GM12878 (cell line): ENCODE measurements at regions of chr5 and their contacts with region 1.

Region 1: DNA sequence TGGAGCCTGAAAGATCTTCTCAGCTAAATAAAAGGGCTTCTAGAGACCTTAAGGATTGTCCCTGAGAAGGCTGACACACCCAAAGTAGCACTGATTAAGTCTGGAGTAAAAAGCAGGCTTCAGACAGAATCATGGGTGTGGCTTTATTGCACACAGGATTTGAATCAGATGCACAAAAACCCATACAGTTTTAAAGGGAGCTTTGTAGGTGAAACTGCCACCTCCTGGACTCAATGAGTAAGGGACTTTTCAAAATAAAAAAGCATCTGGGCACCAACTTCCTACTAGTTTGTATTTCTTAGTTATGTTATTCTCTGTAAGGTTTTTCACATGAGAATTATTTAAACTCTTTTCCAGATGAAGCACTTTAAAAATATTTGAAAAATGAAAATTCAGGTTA is 129.4 kb downstream of the EDIL3 start:
- DNase-seq: no peak
- ATAC-seq: peak; percentile 70
- H3K4me3 ChIP-seq: no peak overlapping the region
- H3K27ac ChIP-seq: no peak overlapping the region
- H3K4me1 ChIP-seq: no peaks in the 10 kb centered on the region
- H3K27me3 ChIP-seq: no peaks in the 10 kb centered on the region
- CTCF ChIP-seq: peak in 2 of 3 experiments; percentile 6 to 27; a peak in 2 of 6 replicates
- EP300 ChIP-seq: no peak
- POLR2A ChIP-seq: no peak
- RAD21 ChIP-seq: peak; percentile 24; the same call in 1 of the 2 replicates

Region 2: DNA sequence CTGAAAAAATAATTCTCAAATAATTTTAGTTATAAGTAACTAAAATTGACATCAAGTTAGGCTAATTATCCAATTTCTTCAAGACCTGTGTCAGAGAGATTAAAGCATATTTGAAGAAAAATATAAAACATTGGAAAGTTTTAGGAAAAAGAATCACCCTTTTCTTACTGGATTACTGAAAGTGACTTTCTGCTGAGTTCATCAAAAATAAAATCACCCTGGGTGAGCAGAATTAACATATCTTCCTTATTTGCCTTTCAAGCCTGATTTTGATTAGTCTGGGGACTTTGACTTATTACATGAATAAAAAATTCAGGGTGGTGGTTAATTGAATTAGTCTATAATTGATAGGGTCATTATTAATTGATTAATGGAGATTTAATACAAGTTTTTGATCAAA is 282.4 kb before region 1 on chr5:
- CTCF ChIA-PET with region 1: no interaction called
- POLR2A ChIA-PET with region 1: no interaction called
- RAD21 ChIA-PET with region 1: no interaction called
- SMC1A ChIA-PET with region 1: no interaction called
- in situ Hi-C with region 1: no loop called
- intact Hi-C with region 1: no loop called
- DNase-seq: no peak
- ATAC-seq: no peak
- H3K4me3 ChIP-seq: no peak overlapping the region
- H3K27ac ChIP-seq: no peak overlapping the region
- H3K4me1 ChIP-seq: no peaks in the 10 kb centered on the region
- H3K27me3 ChIP-seq: no peaks in the 10 kb centered on the region
- CTCF ChIP-seq: no peak
- EP300 ChIP-seq: no peak
- POLR2A ChIP-seq: no peak
- RAD21 ChIP-seq: no peak

Region 3: GRCh38 chr5:84069608-84070179 is 185.6 kb before region 1 on chr5:
- CTCF ChIA-PET with region 1: no interaction called
- POLR2A ChIA-PET with region 1: no interaction called
- RAD21 ChIA-PET with region 1: no interaction called
- SMC1A ChIA-PET with region 1: no interaction called
- in situ Hi-C with region 1: no loop called
- intact Hi-C with region 1: no loop called
- DNase-seq: no peak
- ATAC-seq: no peak
- H3K4me3 ChIP-seq: no peak overlapping the region
- H3K27ac ChIP-seq: no peak overlapping the region
- H3K4me1 ChIP-seq: no peaks in the 10 kb centered on the region
- H3K27me3 ChIP-seq: no peaks in the 10 kb centered on the region
- CTCF ChIP-seq: no peak
- EP300 ChIP-seq: no peak
- POLR2A ChIP-seq: no peak
- RAD21 ChIP-seq: no peak

Region 4: GRCh38 chr5:84088995-84089394 is 166.3 kb before region 1 on chr5:
- CTCF ChIA-PET with region 1: interaction called, 14 read pairs
- POLR2A ChIA-PET with region 1: no interaction called
- RAD21 ChIA-PET with region 1: interaction called, 11 read pairs
- SMC1A ChIA-PET with region 1: interaction called, 8 read pairs
- in situ Hi-C with region 1: no loop called
- intact Hi-C with region 1: loop called (anchors 5 kb)
- DNase-seq: no peak
- ATAC-seq: peak; percentile 71
- H3K4me3 ChIP-seq: no peak overlapping the region
- H3K27ac ChIP-seq: no peak overlapping the region
- H3K4me1 ChIP-seq: no peaks in the 10 kb centered on the region
- H3K27me3 ChIP-seq: no peaks in the 10 kb centered on the region
- CTCF ChIP-seq: peak; percentile 14 to 61 (median 37); a peak in 4 of 6 replicates
- EP300 ChIP-seq: no peak
- POLR2A ChIP-seq: no peak
- RAD21 ChIP-seq: peak; percentile 59

Region 5: GRCh38 chr5:84327591-84327990 is 72.3 kb after region 1 on chr5:
- CTCF ChIA-PET with region 1: no interaction called
- POLR2A ChIA-PET with region 1: no interaction called
- RAD21 ChIA-PET with region 1: no interaction called
- SMC1A ChIA-PET with region 1: no interaction called
- in situ Hi-C with region 1: no loop called
- intact Hi-C with region 1: no loop called
- DNase-seq: no peak
- ATAC-seq: no peak
- H3K4me3 ChIP-seq: no peak overlapping the region
- H3K27ac ChIP-seq: no peak overlapping the region
- H3K4me1 ChIP-seq: no peaks in the 10 kb centered on the region
- H3K27me3 ChIP-seq: no peaks in the 10 kb centered on the region
- CTCF ChIP-seq: no peak
- EP300 ChIP-seq: no peak
- POLR2A ChIP-seq: no peak
- RAD21 ChIP-seq: no peak